Ascending aorta (tissue), 2 donors: ENCODE measurements at regions of chr15 and their contacts with region 1.

Region 1: GRCh38 chr15:68383161-68384074 is 48.5 kb downstream of the ITGA11 start:
- DNase-seq: peak in 1 of 2 donors; percentile 62
- H3K4me3 ChIP-seq: no peak overlapping the region
- H3K27ac ChIP-seq: peak overlapping the region; percentile 73 to 80
- H3K4me1 ChIP-seq: peaks cover 8 to 27% of the 10 kb centered on the region in 2 donors
- H3K27me3 ChIP-seq: no peaks in the 10 kb centered on the region
- CTCF ChIP-seq: peak; percentile 55 to 64 (median 61)

Region 2: GRCh38 chr15:68421115-68421551 is 37.7 kb after region 1 on chr15:
- intact Hi-C with region 1: loop called (anchors 5 kb)
- DNase-seq: peak in 1 of 2 donors; percentile 63
- H3K4me3 ChIP-seq: no peak overlapping the region
- H3K27ac ChIP-seq: peak overlapping the region; percentile 68 to 70
- H3K4me1 ChIP-seq: peaks cover 10 to 46% of the 10 kb centered on the region in 2 donors
- H3K27me3 ChIP-seq: no peaks in the 10 kb centered on the region
- CTCF ChIP-seq: no peak